ENCODE measurements at regions of chr2 and their contacts with region 1.

Region 1: GRCh38 chr2:163191372-163191771 is 352.8 kb upstream of the KCNH7 start:
- DNase-seq: peak; percentile 24
- ATAC-seq: peak; percentile 43; the same call in 1 of the 3 replicates
- H3K4me3 ChIP-seq: no peak overlapping the region
- H3K27ac ChIP-seq: no peak overlapping the region
- H3K4me1 ChIP-seq: no peaks in the 10 kb centered on the region
- H3K27me3 ChIP-seq: no peaks in the 10 kb centered on the region
- CTCF ChIP-seq: peak; percentile 65
- EP300 ChIP-seq: no peak
- POLR2A ChIP-seq: no peak
- RAD21 ChIP-seq: peak; percentile 27; the same call in 1 of the 2 replicates

Region 2: DNA sequence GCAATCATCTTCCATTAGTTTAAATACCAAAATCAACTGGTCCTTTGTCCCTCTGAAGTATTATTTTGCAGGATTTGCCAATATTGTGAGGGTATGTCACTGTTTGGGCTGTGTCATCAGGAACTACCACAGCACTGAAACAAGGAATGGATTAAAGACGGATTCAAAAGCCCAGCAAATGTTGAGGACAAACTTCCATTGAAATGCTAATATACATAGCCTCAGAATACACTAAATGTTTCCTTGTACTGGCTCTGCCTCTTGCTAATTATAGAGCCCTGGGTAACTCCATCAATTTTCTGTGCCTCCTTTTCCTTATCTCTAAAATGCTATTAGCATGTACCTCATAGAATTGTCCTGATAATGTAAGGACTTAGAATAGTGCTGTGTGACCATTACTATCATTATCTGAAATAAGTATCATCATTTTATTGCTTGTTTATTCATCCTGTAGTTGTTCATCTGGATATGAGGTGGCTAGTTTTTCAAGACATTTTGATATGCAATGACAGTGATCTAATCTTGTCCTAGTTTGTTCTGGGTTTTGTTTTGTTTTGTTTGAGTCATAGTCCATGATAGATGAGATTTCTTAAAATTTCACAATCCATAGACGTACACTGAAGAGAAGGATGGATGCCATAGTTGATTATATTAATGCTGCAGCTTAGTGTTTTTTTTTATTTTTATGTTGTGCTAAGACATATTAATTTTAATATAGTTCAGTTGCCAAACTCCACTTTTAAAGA is 19.4 kb before region 1 on chr2:
- CTCF ChIA-PET with region 1: no interaction called
- POLR2A ChIA-PET with region 1: no interaction called
- in situ Hi-C with region 1: no loop called
- intact Hi-C with region 1: no loop called
- DNase-seq: no peak
- ATAC-seq: no peak
- H3K4me3 ChIP-seq: no peak overlapping the region
- H3K27ac ChIP-seq: no peak overlapping the region
- H3K4me1 ChIP-seq: no peaks in the 10 kb centered on the region
- H3K27me3 ChIP-seq: no peaks in the 10 kb centered on the region
- CTCF ChIP-seq: no peak
- EP300 ChIP-seq: no peak
- POLR2A ChIP-seq: no peak
- RAD21 ChIP-seq: no peak

Region 3: GRCh38 chr2:163878531-163879117 is 687.3 kb after region 1 on chr2:
- CTCF ChIA-PET with region 1: no interaction called
- POLR2A ChIA-PET with region 1: no interaction called
- in situ Hi-C with region 1: no loop called
- intact Hi-C with region 1: loop called (anchors 1 kb)
- DNase-seq: peak; percentile 59
- ATAC-seq: peak; percentile 94
- H3K4me3 ChIP-seq: no peak overlapping the region
- H3K27ac ChIP-seq: no peak overlapping the region
- H3K4me1 ChIP-seq: no peaks in the 10 kb centered on the region
- H3K27me3 ChIP-seq: no peaks in the 10 kb centered on the region
- CTCF ChIP-seq: peak; percentile 77
- EP300 ChIP-seq: no peak
- POLR2A ChIP-seq: no peak
- RAD21 ChIP-seq: peak; percentile 58

Region 4: DNA sequence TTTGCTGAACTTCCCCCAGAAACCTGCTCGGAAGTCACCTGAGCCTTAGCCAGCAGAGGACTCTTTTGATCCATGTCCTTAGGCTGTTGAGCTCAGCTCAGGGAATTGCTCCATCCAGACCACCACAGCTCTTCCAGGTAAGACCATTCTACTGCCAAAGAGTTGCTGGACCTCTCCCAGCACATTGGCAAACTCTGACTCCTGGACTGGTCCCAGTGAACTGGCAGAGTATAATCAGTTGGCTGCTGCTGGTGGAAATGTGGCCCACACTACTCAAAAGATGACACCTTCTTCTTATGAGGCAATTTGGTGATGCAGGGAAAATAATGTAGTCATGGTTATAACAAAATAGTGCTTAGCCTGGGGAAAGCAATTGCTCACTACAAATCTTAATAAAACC is 853.3 kb after region 1 on chr2:
- CTCF ChIA-PET with region 1: no interaction called
- POLR2A ChIA-PET with region 1: no interaction called
- in situ Hi-C with region 1: no loop called
- intact Hi-C with region 1: loop called (anchors 5 kb)
- DNase-seq: no peak
- ATAC-seq: no peak
- H3K4me3 ChIP-seq: no peak overlapping the region
- H3K27ac ChIP-seq: no peak overlapping the region
- H3K4me1 ChIP-seq: no peaks in the 10 kb centered on the region
- H3K27me3 ChIP-seq: no peaks in the 10 kb centered on the region
- CTCF ChIP-seq: no peak
- EP300 ChIP-seq: no peak
- POLR2A ChIP-seq: no peak
- RAD21 ChIP-seq: no peak

Region 5: GRCh38 chr2:164061129-164061746 is 869.9 kb after region 1 on chr2:
- CTCF ChIA-PET with region 1: interaction called, 9 read pairs
- POLR2A ChIA-PET with region 1: no interaction called
- in situ Hi-C with region 1: loop called (anchors 10 kb)
- intact Hi-C with region 1: loop called (anchors 1 kb)
- DNase-seq: peak; percentile 53
- ATAC-seq: peak; percentile 78
- H3K4me3 ChIP-seq: no peak overlapping the region
- H3K27ac ChIP-seq: no peak overlapping the region
- H3K4me1 ChIP-seq: no peaks in the 10 kb centered on the region
- H3K27me3 ChIP-seq: no peaks in the 10 kb centered on the region
- CTCF ChIP-seq: peak; percentile 82
- EP300 ChIP-seq: no peak
- POLR2A ChIP-seq: no peak
- RAD21 ChIP-seq: peak; percentile 74

Region 6: GRCh38 chr2:164430166-164430783 is 1238.9 kb after region 1 on chr2:
- CTCF ChIA-PET with region 1: interaction called, 4 read pairs
- POLR2A ChIA-PET with region 1: no interaction called
- in situ Hi-C with region 1: no loop called
- intact Hi-C with region 1: loop called (anchors 2 kb)
- DNase-seq: peak; percentile 39
- ATAC-seq: peak; percentile 91
- H3K4me3 ChIP-seq: no peak overlapping the region
- H3K27ac ChIP-seq: no peak overlapping the region
- H3K4me1 ChIP-seq: no peaks in the 10 kb centered on the region
- H3K27me3 ChIP-seq: 0 out of 5 replicates have a peak, but pooled peaks cover 0 to 4% of the 10 kb centered on the region in 2 experiments
- CTCF ChIP-seq: peak; percentile 69
- EP300 ChIP-seq: no peak
- POLR2A ChIP-seq: no peak
- RAD21 ChIP-seq: no peak

Region 7: GRCh38 chr2:164479460-164479859 is 1288.1 kb after region 1 on chr2:
- CTCF ChIA-PET with region 1: no interaction called
- POLR2A ChIA-PET with region 1: no interaction called
- in situ Hi-C with region 1: no loop called
- intact Hi-C with region 1: loop called (anchors 1 kb)
- DNase-seq: peak; percentile 43
- ATAC-seq: peak; percentile 56; the same call in 2 of the 3 replicates
- H3K4me3 ChIP-seq: no peak overlapping the region
- H3K27ac ChIP-seq: no peak overlapping the region
- H3K4me1 ChIP-seq: peaks cover 15% of the 10 kb centered on the region
- H3K27me3 ChIP-seq: no peaks in the 10 kb centered on the region
- CTCF ChIP-seq: peak; percentile 73
- EP300 ChIP-seq: no peak
- POLR2A ChIP-seq: no peak
- RAD21 ChIP-seq: peak; percentile 37; the same call in 1 of the 2 replicates

Region 8: GRCh38 chr2:164792316-164793178 is 1601.2 kb after region 1 on chr2:
- CTCF ChIA-PET with region 1: no interaction called
- POLR2A ChIA-PET with region 1: no interaction called
- in situ Hi-C with region 1: no loop called
- intact Hi-C with region 1: no loop called
- DNase-seq: no peak
- ATAC-seq: no peak
- H3K4me3 ChIP-seq: no peak overlapping the region
- H3K27ac ChIP-seq: no peak overlapping the region
- H3K4me1 ChIP-seq: peaks cover 21% of the 10 kb centered on the region
- H3K27me3 ChIP-seq: no peaks in the 10 kb centered on the region
- CTCF ChIP-seq: no peak
- EP300 ChIP-seq: no peak
- POLR2A ChIP-seq: no peak
- RAD21 ChIP-seq: no peak

Measured in HepG2 (cell line).